Endothelial cell of umbilical vein (primary cell): ENCODE measurements at regions of chr10 and their contacts with region 1.

Region 1: GRCh38 chr10:28663576-28664313 is 13.6 kb upstream of the BAMBI start:
- DNase-seq: peak; percentile 80
- H3K4me3 ChIP-seq: no peak overlapping the region
- H3K27ac ChIP-seq: no peak overlapping the region
- H3K4me1 ChIP-seq: no peaks in the 10 kb centered on the region
- H3K27me3 ChIP-seq: peaks cover 8 to 12% of the 10 kb centered on the region in 2 experiments
- CTCF ChIP-seq: peak; percentile 95 to 96
- POLR2A ChIP-seq: no peak

Region 2: GRCh38 chr10:28637346-28637745 is 26.4 kb before region 1 on chr10:
- CTCF ChIA-PET with region 1: interaction called, 10 read pairs
- POLR2A ChIA-PET with region 1: no interaction called
- dilution Hi-C with region 1: no loop called
- intact Hi-C with region 1: no loop called
- DNase-seq: no peak
- H3K4me3 ChIP-seq: no peak overlapping the region
- H3K27ac ChIP-seq: no peak overlapping the region
- H3K4me1 ChIP-seq: no peaks in the 10 kb centered on the region
- H3K27me3 ChIP-seq: no peaks in the 10 kb centered on the region
- CTCF ChIP-seq: no peak
- POLR2A ChIP-seq: no peak

Region 3: GRCh38 chr10:28984431-28984830 is 320.7 kb after region 1 on chr10:
- CTCF ChIA-PET with region 1: interaction called, 295 read pairs
- POLR2A ChIA-PET with region 1: no interaction called
- dilution Hi-C with region 1: no loop called
- intact Hi-C with region 1: no loop called
- DNase-seq: peak; percentile 93
- H3K4me3 ChIP-seq: no peak overlapping the region
- H3K27ac ChIP-seq: no peak overlapping the region
- H3K4me1 ChIP-seq: peaks cover 7% of the 10 kb centered on the region
- H3K27me3 ChIP-seq: peaks cover 0 to 2% of the 10 kb centered on the region in 2 experiments
- CTCF ChIP-seq: no peak
- POLR2A ChIP-seq: no peak

Region 4: GRCh38 chr10:29119374-29119773 is 455.6 kb after region 1 on chr10:
- CTCF ChIA-PET with region 1: interaction called, 11 read pairs
- POLR2A ChIA-PET with region 1: no interaction called
- dilution Hi-C with region 1: no loop called
- intact Hi-C with region 1: no loop called
- DNase-seq: peak; percentile 42
- H3K4me3 ChIP-seq: no peak overlapping the region
- H3K27ac ChIP-seq: no peak overlapping the region
- H3K4me1 ChIP-seq: no peaks in the 10 kb centered on the region
- H3K27me3 ChIP-seq: peaks cover 0 to 5% of the 10 kb centered on the region in 2 experiments
- CTCF ChIP-seq: peak; percentile 62 to 66
- POLR2A ChIP-seq: no peak

Region 5: DNA sequence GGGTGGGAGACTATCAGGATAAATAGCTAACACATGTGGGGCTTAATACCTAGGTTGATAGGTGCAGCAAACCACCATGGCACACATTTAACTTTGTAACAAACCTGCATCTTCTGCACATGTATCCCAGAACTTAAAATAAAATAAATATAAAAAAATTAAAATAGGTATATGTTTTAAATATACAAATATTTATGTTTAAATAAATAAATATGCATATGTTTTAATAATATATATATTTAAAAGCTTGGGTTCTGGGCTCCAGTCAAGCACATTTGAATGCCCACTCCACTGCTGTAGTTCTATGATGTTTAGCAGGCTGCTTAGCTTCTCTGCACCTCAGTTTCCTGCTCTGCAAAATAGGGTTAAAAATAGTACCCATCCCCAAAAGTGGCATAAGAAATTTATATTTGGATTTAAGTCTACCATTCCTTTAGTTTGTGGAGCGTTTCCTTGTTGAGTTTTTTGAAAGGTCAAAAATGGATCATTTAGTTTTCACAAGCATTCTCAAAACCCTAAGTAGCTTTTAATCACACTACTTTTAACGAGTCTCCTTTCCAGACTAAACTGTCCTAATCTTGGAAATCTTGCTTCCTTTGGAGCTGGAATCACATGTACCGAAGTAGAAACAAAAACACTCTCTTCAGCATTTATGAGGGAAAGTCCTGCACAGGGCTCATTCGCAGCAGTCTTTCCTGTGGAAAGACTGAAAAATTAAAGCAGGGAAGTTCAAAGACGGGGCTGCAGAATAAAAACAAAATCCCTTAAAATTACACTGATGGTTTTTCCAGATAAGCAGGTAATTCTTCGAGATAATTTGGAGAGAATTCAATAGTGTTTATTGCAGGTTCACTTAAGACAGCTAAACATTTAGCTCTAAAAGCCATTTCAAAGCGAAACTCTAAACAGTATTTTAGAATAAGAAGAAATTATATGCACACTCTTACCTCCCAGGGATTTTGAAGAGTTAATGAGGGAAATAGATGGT is 513.4 kb after region 1 on chr10:
- CTCF ChIA-PET with region 1: interaction called, 11 read pairs
- POLR2A ChIA-PET with region 1: no interaction called
- dilution Hi-C with region 1: no loop called
- intact Hi-C with region 1: no loop called
- DNase-seq: peak; percentile 86
- H3K4me3 ChIP-seq: no peak overlapping the region
- H3K27ac ChIP-seq: no peak overlapping the region
- H3K4me1 ChIP-seq: no peaks in the 10 kb centered on the region
- H3K27me3 ChIP-seq: peaks cover 7 to 10% of the 10 kb centered on the region in 2 experiments
- CTCF ChIP-seq: no peak
- POLR2A ChIP-seq: no peak